ENCODE measurements at regions of chr14 and their contacts with region 1.

Region 1: GRCh38 chr14:73949744-73950734 is at the starts of genes COQ6 and FAM161B:
- DNase-seq: peak; percentile 79 to 97
- H3K4me3 ChIP-seq: peak within 1 kb of the TSS; percentile 78 to 85
- H3K27ac ChIP-seq: peak within 1 kb of the TSS; percentile 88 to 95
- H3K4me1 ChIP-seq: peaks cover 0 to 12% of the 10 kb centered on the region in 2 donors
- H3K27me3 ChIP-seq: no peaks in the 10 kb centered on the region
- CTCF ChIP-seq: peak in 2 of 3 experiments; percentile 7 to 19
- total RNA-seq, gene COQ6: 6.7 TPM
- total RNA-seq, gene FAM161B: 0.53 TPM

Region 2: DNA sequence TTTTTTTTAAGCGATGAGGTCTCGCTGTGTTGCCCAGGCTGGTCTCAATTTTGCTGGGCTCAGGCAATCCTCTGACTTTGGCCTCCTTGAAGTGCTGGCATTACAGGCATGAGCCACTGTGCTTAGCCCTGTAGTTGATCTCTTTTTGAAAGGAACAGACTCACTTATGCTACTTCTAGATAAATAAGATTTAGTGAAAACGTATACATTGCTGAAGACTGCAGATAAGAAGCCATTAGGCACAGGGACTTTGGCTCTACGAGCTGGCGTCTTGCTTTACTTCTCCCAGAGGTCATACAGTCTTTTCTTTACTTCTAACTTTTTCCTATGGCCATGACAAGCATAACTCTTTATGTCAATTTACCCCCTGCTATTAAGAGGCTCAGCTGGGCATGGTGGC is 89.0 kb before region 1 on chr14:
- intact Hi-C with region 1: no loop called
- DNase-seq: no peak
- H3K4me3 ChIP-seq: no peak overlapping the region
- H3K27ac ChIP-seq: no peak overlapping the region
- H3K4me1 ChIP-seq: no peaks in the 10 kb centered on the region
- H3K27me3 ChIP-seq: no peaks in the 10 kb centered on the region
- CTCF ChIP-seq: no peak

Region 3: GRCh38 chr14:74018586-74019407 is 68.8 kb after region 1 on chr14 and contains the starts of genes BBOF1 and ENTPD5:
- intact Hi-C with region 1: loop called (anchors 1 kb)
- DNase-seq: peak; percentile 31 to 92
- H3K4me3 ChIP-seq: peak within 1 kb of the TSS; percentile 82 to 97
- H3K27ac ChIP-seq: peak within 1 kb of the TSS; percentile 95 to 99
- H3K4me1 ChIP-seq: peaks cover 2 to 7% of the 10 kb centered on the region in 2 donors
- H3K27me3 ChIP-seq: no peaks in the 10 kb centered on the region
- CTCF ChIP-seq: no peak
- total RNA-seq, gene BBOF1: 16.2 TPM
- total RNA-seq, gene ENTPD5: 2.6 TPM